Heart right ventricle (tissue), 16 donors: ENCODE measurements at regions of chr2 and their contacts with region 1.

Region 1: GRCh38 chr2:223993621-223994232 is 36.5 kb downstream of the MRPL44 start:
- DNase-seq: peak in 1 of 2 donors; percentile 64
- ATAC-seq: peak; percentile 17 to 84 (median 78)
- H3K4me3 ChIP-seq: no peak overlapping the region
- H3K27ac ChIP-seq: peak overlapping the region in 1 of 10 donors; percentile 15
- H3K4me1 ChIP-seq: peaks cover 0 to 5% (median 0%) of the 10 kb centered on the region in 9 donors
- H3K27me3 ChIP-seq: no peaks in the 10 kb centered on the region
- CTCF ChIP-seq: peak; percentile 69 to 89 (median 80)

Region 2: GRCh38 chr2:224039124-224039940 is 45.6 kb after region 1 on chr2 and contains the start of gene SERPINE2:
- intact Hi-C with region 1: loop called in 2 of 10 experiments (anchors 5 kb)
- DNase-seq: peak; percentile 43 to 57
- ATAC-seq: peak; percentile 57 to 85 (median 78)
- H3K4me3 ChIP-seq: peak within 1 kb of the TSS; percentile 30 to 73 (median 64)
- H3K27ac ChIP-seq: peak within 1 kb of the TSS in 9 of 10 donors; percentile 18 to 78 (median 65)
- H3K4me1 ChIP-seq: peaks cover 0 to 50% (median 14%) of the 10 kb centered on the region in 9 donors
- H3K27me3 ChIP-seq: peaks cover 0 to 73% (median 54%) of the 10 kb centered on the region in 7 donors
- CTCF ChIP-seq: peak in 7 of 9 donors; percentile 26 to 58 (median 42)
- total RNA-seq, gene SERPINE2: 5.3 to 56.6 (median 19.7) TPM

Region 3: DNA sequence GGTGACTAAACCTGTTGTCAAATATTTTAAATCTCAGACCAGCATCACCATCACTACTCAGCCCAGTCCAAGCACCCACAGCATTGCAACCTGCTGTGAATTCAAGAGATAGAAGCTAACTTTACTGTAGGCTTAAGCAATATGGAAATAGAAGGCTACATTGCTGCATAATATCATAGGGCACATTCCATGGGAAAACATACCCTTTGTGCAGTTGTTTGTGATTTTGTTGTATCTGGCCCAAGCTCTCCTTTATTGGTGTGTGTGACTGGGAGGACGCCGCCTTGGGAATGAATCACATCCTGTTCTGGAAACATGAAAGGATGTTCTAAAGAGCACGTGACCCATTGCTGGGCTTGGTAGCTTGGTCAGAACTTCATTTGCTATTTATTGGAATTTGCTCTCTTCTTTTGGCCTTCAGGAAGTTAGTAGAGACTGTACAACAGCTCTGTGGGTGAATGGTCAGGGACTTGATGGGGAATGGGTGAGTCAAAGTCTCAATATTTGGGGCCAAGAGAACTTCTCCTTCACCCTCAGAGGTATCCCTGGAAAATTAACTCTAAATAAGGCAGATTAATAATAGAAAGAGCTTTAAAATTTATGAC is 152.1 kb after region 1 on chr2:
- intact Hi-C with region 1: loop called in 1 of 10 experiments (anchors 5 kb)
- DNase-seq: peak in 1 of 2 donors; percentile 44
- ATAC-seq: peak in 6 of 8 donors; percentile 75 to 90 (median 83)
- H3K4me3 ChIP-seq: no peak overlapping the region
- H3K27ac ChIP-seq: peak overlapping the region in 6 of 10 donors; percentile 32 to 64 (median 48)
- H3K4me1 ChIP-seq: peaks cover 0 to 19% (median 4%) of the 10 kb centered on the region in 9 donors
- H3K27me3 ChIP-seq: peaks cover 0 to 2% (median 0%) of the 10 kb centered on the region in 7 donors
- CTCF ChIP-seq: no peak

Region 4: DNA sequence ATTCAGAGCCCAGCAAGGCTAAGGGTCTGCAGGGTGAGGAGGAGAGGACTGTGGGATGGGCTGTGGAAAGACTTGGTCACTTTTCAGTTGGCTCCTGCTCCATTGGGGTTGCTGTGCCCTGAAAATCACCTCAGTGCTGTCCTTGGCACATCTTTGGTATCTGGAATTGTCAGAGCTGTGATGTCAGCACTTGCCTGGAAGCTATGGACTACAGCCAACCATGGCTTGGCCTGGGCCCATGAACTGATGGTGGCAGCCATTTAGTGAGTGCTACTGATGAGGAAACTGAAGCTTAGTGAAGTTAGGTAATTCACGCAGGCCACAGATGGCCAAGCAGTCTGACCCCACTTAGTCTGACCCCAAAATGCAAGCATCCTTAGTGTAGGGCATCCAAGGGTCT is 167.2 kb after region 1 on chr2:
- intact Hi-C with region 1: no loop called
- DNase-seq: peak; percentile 29 to 42
- ATAC-seq: peak in 4 of 8 donors; percentile 23 to 55 (median 38)
- H3K4me3 ChIP-seq: no peak overlapping the region
- H3K27ac ChIP-seq: no peak overlapping the region
- H3K4me1 ChIP-seq: peaks cover 0 to 54% (median 0%) of the 10 kb centered on the region in 9 donors
- H3K27me3 ChIP-seq: no peaks in the 10 kb centered on the region
- CTCF ChIP-seq: no peak

Region 5: DNA sequence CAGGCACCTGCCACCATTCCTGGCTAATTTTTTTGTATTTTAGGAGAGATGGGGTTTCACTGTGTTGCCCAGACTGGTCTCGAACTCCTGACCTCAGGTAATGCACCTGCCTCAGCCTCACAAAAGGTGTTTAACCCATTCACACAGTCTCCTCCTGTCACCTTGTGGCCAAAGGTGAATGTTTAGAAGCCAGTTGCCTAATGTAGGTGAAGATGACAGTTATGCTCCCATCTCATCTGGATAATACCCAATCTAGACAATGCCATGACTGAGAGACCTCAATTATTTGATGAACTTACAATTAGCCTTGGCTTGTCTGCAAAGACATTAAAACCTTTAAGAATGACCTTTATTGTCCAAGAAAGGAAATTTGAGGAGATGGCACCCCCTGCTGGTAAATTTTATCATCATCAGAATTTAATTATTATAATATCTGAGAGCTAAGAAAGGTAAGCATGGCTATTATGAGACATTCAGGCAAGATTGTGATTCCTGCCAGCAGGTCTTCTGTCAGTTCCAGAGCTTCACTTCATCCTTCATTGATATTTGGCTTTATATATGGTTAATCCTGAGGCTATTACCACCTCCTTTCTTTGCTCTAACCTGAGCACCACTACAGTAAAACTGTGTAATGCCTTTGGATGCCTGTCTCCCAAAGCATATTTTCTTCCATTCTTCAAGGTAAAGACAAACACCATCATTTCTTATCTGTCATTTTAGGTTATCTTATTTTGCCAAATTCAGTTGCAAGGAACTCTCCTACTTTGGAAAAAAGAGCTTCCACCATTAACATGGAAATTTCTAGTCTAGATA is 290.6 kb after region 1 on chr2:
- intact Hi-C with region 1: loop called (anchors 1 to 5 kb)
- DNase-seq: peak in 1 of 2 donors; percentile 19
- ATAC-seq: peak in 7 of 8 donors; percentile 37 to 53 (median 42)
- H3K4me3 ChIP-seq: no peak overlapping the region
- H3K27ac ChIP-seq: no peak overlapping the region
- H3K4me1 ChIP-seq: peaks cover 0 to 12% (median 0%) of the 10 kb centered on the region in 9 donors
- H3K27me3 ChIP-seq: peaks cover 0 to 41% (median 7%) of the 10 kb centered on the region in 7 donors
- CTCF ChIP-seq: peak; percentile 38 to 82 (median 64)

Region 6: GRCh38 chr2:224650815-224651439 is 657.2 kb after region 1 on chr2:
- intact Hi-C with region 1: loop called in 2 of 10 experiments (anchors 5 to 10 kb)
- DNase-seq: peak in 1 of 2 donors; percentile 10
- ATAC-seq: peak in 6 of 8 donors; percentile 50 to 70 (median 60)
- H3K4me3 ChIP-seq: no peak overlapping the region
- H3K27ac ChIP-seq: no peak overlapping the region
- H3K4me1 ChIP-seq: no peaks in the 10 kb centered on the region
- H3K27me3 ChIP-seq: peaks cover 0 to 5% (median 0%) of the 10 kb centered on the region in 7 donors
- CTCF ChIP-seq: peak; percentile 52 to 88 (median 81)